Activated naive CD4-positive, alpha-beta T cell treated with anti-CD3 and anti-CD28 coated beads for 36 hours (primary cell): ENCODE measurements at regions of chr22 and their contacts with region 1.

Region 1: DNA sequence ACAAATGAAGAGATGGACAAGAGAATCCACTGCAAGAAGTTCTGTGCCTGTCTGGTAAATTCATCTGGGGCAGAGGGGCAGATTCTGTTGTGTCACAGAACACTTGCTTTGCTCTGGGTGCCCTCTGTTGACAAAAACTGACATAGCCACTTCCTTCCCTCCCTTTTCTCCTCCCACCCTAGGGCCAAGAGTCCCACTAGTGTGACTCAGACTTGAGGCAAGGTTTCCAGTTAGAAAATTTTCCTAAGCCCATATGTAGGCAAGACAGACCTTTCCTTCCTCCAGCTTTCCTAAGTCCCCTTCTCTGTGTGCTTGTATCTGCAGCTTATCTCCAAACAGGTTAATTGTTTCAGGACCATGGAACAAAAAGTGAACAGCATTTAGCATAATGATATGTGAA is 106.8 kb downstream of the RBFOX2 start:
- DNase-seq: peak; percentile 69
- H3K4me3 Mint-ChIP-seq: no peak overlapping the region
- H3K27ac Mint-ChIP-seq: no peak overlapping the region
- H3K4me1 Mint-ChIP-seq: peaks cover 4% of the 10 kb centered on the region
- H3K27me3 Mint-ChIP-seq: no peaks in the 10 kb centered on the region

Region 2: DNA sequence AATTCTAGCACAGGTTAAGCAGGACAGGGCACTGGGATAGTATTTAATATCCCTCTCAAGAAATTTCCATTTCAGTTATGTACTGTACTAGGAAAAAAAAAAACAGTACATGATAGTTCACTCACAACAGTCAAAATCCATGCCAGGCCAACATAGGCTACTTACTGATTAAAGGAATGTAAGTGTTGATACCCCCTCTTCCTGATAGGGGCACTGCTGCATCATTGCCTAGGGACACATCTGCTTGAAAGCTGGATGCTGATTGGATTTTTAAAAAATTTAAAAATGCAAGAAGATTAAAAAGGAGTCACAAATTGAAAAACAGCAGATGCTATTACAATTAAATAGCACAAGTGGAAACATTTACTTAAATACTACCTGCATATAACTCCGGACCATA is 160.7 kb before region 1 on chr22:
- CTCF ChIA-PET with region 1: interaction called, 3 read pairs
- intact Hi-C with region 1: loop called (anchors 10 kb)
- DNase-seq: peak; percentile 8
- H3K4me3 Mint-ChIP-seq: no peak overlapping the region
- H3K27ac Mint-ChIP-seq: no peak overlapping the region
- H3K4me1 Mint-ChIP-seq: no peaks in the 10 kb centered on the region
- H3K27me3 Mint-ChIP-seq: no peaks in the 10 kb centered on the region

Region 3: DNA sequence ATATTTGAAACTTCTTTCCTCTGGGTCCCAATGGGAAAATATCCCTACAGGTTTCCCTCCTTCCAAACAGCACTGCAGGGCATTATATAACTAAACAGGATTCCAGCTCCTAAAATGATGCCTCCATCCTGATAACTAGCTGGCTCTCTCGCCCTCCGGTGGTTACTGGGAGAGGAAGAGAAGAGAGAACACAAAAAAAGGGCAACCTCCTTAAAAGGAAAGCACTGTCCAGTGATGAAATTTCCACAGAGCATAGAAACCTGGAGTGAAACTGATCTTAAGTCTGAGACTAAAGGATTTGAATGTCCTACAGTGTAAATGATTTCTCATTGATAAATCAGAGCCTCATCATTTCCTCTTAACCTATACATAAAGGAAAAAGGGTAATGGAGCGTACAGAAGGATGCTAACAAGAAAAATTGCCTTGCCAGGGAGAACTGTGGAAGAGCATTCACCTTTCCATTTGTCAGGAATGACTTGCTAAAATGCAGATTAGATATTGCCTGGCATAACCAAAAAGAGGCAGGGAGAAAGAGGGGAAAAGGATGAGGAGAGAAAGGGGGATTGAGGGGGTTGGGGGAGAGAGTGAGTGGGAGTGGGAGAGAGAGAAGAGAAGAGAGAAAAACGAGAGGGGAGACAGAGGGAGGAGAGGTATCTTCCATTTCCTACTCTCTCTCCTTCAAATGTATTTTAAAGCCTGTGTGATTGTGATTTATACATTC is 82.8 kb before region 1 on chr22:
- CTCF ChIA-PET with region 1: no interaction called
- intact Hi-C with region 1: loop called (anchors 2 kb)
- DNase-seq: peak; percentile 51
- H3K4me3 Mint-ChIP-seq: no peak overlapping the region
- H3K27ac Mint-ChIP-seq: no peak overlapping the region
- H3K4me1 Mint-ChIP-seq: peaks cover 27% of the 10 kb centered on the region
- H3K27me3 Mint-ChIP-seq: peaks cover 8% of the 10 kb centered on the region

Region 4: GRCh38 chr22:35896306-35896705 is 25.5 kb before region 1 on chr22:
- CTCF ChIA-PET with region 1: no interaction called
- intact Hi-C with region 1: no loop called
- DNase-seq: no peak
- H3K4me3 Mint-ChIP-seq: no peak overlapping the region
- H3K27ac Mint-ChIP-seq: peak overlapping the region; percentile 40
- H3K4me1 Mint-ChIP-seq: peaks cover 14% of the 10 kb centered on the region
- H3K27me3 Mint-ChIP-seq: peaks cover 4% of the 10 kb centered on the region